GM10248 (cell line): ENCODE measurements at regions of chr1 and their contacts with region 1.

Region 1: DNA sequence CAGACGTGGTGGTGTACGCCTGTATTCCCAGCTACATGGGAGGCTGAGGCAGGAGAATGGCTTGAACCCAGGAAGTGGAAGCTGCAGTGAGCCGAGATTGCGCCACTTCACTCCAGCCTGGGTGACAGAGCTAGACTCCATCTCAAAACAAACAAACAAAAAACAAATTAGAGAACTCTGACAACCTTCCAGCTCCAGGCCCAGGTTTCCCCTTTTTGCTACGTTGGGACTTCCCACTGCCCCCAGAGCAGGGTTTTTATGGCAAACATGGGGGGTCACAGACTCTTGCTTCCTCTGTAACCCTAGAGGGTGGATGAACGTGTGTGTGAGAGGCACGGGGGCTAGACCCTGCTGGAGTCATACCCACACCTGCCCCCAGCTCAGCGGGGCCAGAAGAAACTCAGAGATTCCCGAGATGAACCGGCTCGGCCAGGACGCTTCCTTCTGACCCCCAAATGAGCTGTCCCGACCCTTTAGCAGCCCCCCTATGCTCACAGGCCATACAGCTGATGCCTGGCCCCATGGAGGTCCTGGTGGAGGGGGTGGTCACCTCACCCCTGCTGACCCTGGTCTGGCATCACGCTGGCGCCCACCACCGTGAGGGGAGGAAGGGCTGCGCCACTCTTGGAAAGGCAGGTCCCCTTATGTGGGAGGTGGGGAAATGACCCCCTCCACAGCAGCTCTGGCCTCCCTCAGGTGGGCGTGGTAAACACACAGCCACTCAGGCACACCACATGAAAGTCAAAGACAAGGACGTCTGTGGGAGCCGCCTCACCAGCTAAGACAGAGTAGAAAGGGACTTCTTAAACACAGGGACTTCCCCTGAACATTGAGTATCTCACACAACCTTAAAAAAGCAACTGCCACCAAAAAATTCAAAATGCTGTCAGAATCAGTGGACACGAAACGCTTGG is 7.1 kb downstream of the GPR157 start:
- DNase-seq: peak; percentile 78
- CTCF ChIP-seq: no peak

Region 2: GRCh38 chr1:9139930-9140329 is 18.2 kb after region 1 on chr1:
- CTCF ChIA-PET with region 1: interaction called, 15 read pairs
- POLR2A ChIA-PET with region 1: interaction called, 4 read pairs
- DNase-seq: no peak
- CTCF ChIP-seq: no peak

Region 3: DNA sequence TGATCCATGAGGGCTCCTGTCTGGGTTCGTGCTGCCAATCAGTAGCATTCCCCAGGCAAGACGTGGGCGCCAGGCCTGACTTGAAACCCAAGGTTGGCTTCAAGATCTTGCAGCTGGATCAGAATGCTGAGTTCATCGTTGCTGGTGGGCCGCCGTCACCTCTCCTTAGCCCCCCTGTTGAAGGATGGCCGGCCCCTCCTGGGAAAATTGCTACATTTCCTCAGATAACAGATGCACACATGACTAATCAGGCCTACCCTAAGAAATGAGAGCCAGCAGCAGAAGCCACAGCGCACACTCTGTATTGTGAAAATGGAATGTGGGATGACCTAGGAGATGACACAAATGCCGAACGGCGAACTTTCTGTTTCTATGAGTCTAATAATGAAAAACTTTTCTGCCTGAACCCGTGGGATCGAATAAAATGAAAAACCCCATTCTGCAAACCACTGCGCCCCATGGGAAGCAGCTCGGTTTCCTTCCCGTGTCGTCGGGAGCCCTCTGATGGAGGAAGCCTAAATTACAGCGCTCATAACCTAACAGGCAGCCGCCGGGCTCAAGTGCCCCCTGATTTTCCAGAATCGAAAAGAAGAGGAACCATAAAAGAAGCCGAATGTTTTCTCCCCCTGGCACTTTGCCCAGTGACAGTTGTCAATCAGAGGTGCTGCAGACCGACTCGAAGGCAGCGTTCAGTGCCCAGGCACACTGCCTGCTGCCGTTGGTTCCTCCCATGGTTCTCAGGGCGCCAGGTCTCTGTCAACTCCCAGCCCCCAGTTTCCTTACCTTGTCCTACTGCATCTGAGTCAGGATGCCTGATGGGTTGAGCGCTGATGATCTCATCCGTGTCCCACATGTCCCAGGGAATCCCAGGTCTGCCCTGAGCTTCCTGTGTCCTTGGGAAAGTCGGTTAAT is 74.6 kb after region 1 on chr1:
- CTCF ChIA-PET with region 1: interaction called, 18 read pairs
- POLR2A ChIA-PET with region 1: no interaction called
- DNase-seq: peak; percentile 74
- CTCF ChIP-seq: peak; percentile 82

Region 4: DNA sequence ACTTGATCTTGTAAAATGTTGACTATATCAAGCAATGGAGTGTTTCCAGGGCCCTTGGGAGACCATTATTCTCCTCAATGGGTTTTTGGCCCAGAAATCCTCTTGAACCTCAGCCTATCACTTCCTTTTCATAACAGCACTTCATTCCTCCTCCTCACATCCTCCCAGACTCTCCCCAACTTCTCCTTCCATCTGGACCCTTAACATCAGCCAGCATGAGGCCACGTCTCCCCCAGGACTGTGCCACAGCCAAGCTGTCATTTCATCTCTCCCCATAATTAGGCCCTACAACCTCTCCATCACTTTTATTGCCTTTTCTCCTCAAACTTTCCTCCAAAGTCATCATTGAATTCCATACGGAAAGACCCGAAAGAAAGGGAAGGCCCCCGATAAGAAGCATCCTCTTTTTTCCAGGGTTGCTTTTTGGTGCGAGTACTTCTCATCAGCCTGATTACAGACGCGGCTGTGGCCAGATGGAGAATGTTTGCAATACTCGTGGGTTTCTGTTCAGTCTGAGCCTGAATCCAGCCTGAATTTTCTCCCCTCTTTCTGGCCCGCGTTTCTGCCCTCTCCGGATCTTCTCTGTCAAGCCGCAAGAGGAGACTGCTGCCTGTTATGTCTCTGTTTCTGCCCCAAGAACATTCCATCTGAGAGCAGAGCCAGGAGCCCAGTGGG is 364.9 kb after region 1 on chr1:
- CTCF ChIA-PET with region 1: no interaction called
- POLR2A ChIA-PET with region 1: no interaction called
- DNase-seq: no peak
- CTCF ChIP-seq: no peak